Head of caudate nucleus (tissue), 42 donors: ENCODE measurements at regions of chr19 and their contacts with region 1.

Region 1: GRCh38 chr19:50779504-50780457 is 9.5 kb downstream of the GPR32 start:
- DNase-seq: peak; percentile 39 to 94 (median 78)

Region 2: GRCh38 chr19:50368649-50369570 is 410.9 kb before region 1 on chr19:
- intact Hi-C with region 1: loop called (anchors 5 kb)
- DNase-seq: peak; percentile 78 to 97 (median 92)

Region 3: DNA sequence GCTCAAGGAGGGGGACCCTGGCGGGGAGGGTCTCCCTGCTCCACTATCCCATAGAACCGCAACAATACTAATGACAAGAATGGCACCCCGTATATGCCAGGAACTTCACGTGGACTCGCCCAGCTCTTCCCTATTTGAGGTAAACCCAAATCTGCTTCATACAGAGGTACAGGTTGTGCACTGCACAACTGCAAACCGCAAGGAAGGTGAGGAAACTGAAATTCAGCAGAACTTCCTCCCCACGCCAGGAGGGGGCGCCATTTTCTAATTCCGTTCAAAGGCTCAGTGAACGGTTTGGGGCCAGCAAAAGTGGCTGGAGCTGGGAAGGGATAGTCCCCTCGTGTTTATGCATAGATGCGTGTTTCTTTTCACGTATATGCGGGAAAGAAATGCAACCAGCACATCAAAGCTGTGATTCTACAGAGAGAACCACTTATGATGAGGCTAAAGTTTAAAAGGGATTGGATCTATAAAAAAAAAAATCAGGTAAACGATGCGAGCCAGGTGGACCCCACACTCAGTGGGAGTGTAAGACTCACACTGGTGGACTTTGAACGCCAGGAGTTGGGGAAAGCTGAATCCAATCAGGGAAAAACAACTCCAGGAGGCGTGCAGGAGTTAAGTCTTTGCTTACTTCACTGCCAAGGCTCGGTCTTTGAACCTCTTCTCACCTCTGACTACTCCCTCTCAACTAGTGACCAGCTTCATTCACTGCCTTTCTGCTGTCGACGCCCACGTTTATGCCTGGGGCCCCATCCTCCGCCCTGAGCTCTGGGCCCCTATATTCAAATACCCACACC is 110.3 kb before region 1 on chr19:
- intact Hi-C with region 1: loop called (anchors 5 kb)
- DNase-seq: peak in 39 of 42 donors; percentile 16 to 82 (median 59)

Region 4: DNA sequence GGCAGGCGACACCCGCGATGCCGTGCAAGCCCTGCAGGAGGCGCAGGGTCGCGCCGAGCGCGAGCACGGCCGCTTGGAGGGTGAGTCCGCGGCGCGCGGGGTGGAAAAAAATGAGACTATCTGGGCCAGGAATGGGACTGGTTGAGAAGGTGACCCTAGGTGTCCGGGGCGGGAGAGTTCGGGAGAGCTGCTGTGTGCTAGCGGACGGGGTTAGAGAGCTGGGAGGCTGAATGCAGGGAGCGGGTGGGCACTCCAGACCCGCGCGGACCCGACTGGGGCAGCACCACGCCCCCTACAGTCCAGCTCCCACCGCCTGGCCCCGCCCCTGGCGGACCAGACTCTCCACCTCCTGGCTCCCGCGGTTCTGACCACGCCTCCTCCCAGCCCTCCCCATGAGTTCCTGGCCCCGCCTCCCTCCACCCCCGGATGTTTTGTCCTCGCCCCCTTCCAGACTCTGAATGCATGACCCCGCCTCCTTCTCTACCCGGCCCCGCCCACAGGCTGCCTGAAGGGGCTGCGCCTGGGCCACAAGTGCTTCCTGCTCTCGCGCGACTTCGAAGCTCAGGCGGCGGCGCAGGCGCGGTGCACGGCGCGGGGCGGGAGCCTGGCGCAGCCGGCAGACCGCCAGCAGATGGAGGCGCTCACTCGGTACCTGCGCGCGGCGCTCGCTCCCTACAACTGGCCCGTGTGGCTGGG is 55.1 kb before region 1 on chr19:
- intact Hi-C with region 1: loop called (anchors 5 kb)
- DNase-seq: peak; percentile 98 to 100 (median 99)

Region 5: GRCh38 chr19:51002542-51003171 is 222.9 kb after region 1 on chr19:
- intact Hi-C with region 1: no loop called
- DNase-seq: peak in 1 of 42 donors; percentile 5